Breast epithelium (tissue), 4 donors: ENCODE measurements at regions of chr10 and their contacts with region 1.

Region 1: DNA sequence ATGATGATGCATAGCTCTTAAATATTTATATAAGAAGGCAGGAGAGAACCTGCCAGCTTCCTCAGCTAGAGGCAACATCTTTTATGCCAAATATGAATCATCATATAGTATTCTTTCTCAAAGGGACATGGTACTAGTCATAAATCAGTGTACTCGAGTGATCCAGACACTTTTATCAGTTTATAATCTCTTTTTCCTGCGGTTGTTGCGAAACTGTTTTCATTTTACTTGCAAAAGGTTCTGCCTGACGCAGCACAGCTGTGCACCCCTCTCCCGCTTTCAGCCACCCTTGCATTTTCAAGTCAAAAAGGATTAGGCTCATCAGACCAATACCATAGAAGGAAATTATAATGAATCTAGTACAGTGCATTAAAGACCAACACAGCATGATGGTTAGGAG is 332.3 kb upstream of the PRKCQ start:
- DNase-seq: no peak
- H3K4me3 ChIP-seq: no peak overlapping the region
- H3K27ac ChIP-seq: peak overlapping the region in 1 of 2 donors; percentile 46
- H3K4me1 ChIP-seq: no peaks in the 10 kb centered on the region
- H3K27me3 ChIP-seq: no peaks in the 10 kb centered on the region
- CTCF ChIP-seq: no peak
- POLR2A ChIP-seq: no peak

Region 2: GRCh38 chr10:6936931-6937330 is 24.5 kb after region 1 on chr10:
- intact Hi-C with region 1: loop called (anchors 1 kb)
- DNase-seq: no peak
- H3K4me3 ChIP-seq: no peak overlapping the region
- H3K27ac ChIP-seq: no peak overlapping the region
- H3K4me1 ChIP-seq: no peaks in the 10 kb centered on the region
- H3K27me3 ChIP-seq: no peaks in the 10 kb centered on the region
- CTCF ChIP-seq: no peak
- POLR2A ChIP-seq: no peak